H1 (cell line): ENCODE measurements at regions of chr14 and their contacts with region 1.

Region 1: GRCh38 chr14:22929104-22929847 is at the start of gene PRMT5:
- DNase-seq: peak; percentile 99
- H3K4me3 ChIP-seq: peak within 1 kb of the TSS; percentile 65 to 94 (median 86)
- H3K27ac ChIP-seq: peak within 1 kb of the TSS; percentile 95
- H3K4me1 ChIP-seq: peaks cover 0 to 3% (median 1%) of the 10 kb centered on the region in 4 experiments; a peak in 3 of 7 replicates
- H3K27me3 ChIP-seq: no peaks in the 10 kb centered on the region
- CTCF ChIP-seq: no peak
- EP300 ChIP-seq: no peak
- POLR2A ChIP-seq: peak; percentile 82 to 95
- RAD21 ChIP-seq: no peak
- total RNA-seq, gene PRMT5: 159 and 171 TPM in 2 replicates

Region 2: GRCh38 chr14:22748631-22749068 is 180.6 kb before region 1 on chr14:
- CTCF ChIA-PET with region 1: no interaction called
- POLR2A ChIA-PET with region 1: no interaction called
- DNase-seq: no peak
- H3K4me3 ChIP-seq: no peak overlapping the region
- H3K27ac ChIP-seq: no peak overlapping the region
- H3K4me1 ChIP-seq: no peaks in the 10 kb centered on the region
- H3K27me3 ChIP-seq: no peaks in the 10 kb centered on the region
- CTCF ChIP-seq: no peak
- EP300 ChIP-seq: no peak
- POLR2A ChIP-seq: no peak
- RAD21 ChIP-seq: no peak

Region 3: DNA sequence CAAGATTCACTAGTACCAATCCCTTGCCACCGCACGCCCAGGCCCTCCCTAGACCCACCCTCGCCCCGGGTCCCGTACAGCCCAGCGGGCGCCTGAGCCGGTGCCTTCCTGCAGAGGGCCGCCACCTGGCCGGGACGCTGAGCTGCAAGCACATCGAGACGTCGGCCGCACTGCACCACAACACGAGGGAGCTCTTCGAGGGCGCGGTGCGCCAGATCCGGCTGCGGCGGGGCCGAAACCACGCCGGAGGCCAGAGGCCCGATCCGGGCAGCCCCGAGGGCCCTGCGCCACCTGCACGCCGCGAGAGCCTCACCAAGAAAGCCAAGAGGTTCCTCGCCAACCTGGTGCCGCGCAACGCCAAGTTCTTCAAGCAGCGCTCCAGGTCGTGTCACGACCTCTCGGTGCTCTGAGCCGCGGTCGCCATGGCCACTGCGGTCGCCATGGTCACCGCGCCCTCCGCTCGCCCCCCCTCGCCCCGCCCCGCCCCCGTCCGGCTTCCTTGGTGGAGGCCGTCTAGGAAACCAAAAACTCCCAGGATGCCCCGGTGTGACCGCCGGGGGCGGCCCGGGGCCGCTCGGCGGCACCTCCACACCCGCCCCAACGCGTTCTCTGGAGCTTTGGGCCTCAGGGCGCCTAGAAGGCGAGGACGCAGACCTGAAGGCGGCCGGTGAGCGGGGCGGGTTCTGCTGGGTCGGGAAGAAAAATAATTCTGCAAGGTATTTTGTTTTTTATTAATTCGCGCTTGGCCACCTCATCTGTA is 42.6 kb before region 1 on chr14:
- CTCF ChIA-PET with region 1: no interaction called
- POLR2A ChIA-PET with region 1: interaction called, 20 read pairs
- DNase-seq: peak in 1 of 2 experiments; percentile 87
- H3K4me3 ChIP-seq: peak overlapping the region; percentile 57 to 83 (median 65)
- H3K27ac ChIP-seq: peak overlapping the region; percentile 25
- H3K4me1 ChIP-seq: peaks cover 7 to 21% (median 12%) of the 10 kb centered on the region in 4 experiments
- H3K27me3 ChIP-seq: peaks cover 0 to 17% (median 11%) of the 10 kb centered on the region in 4 experiments; a peak in 6 of 7 replicates
- CTCF ChIP-seq: peak; percentile 17 to 35 (median 21); a peak in 3 of 4 replicates
- EP300 ChIP-seq: no peak
- POLR2A ChIP-seq: peak in 1 of 2 experiments; percentile 75; a peak in 2 of 3 replicates
- RAD21 ChIP-seq: peak in 1 of 2 experiments; percentile 6; a peak in 2 of 4 replicates

Region 4: GRCh38 chr14:22939684-22940083 is 10.4 kb after region 1 on chr14:
- CTCF ChIA-PET with region 1: interaction called, 22 read pairs
- POLR2A ChIA-PET with region 1: no interaction called
- DNase-seq: no peak
- H3K4me3 ChIP-seq: no peak overlapping the region
- H3K27ac ChIP-seq: no peak overlapping the region
- H3K4me1 ChIP-seq: no peaks in the 10 kb centered on the region
- H3K27me3 ChIP-seq: no peaks in the 10 kb centered on the region
- CTCF ChIP-seq: no peak
- EP300 ChIP-seq: no peak
- POLR2A ChIP-seq: no peak
- RAD21 ChIP-seq: no peak

Region 5: DNA sequence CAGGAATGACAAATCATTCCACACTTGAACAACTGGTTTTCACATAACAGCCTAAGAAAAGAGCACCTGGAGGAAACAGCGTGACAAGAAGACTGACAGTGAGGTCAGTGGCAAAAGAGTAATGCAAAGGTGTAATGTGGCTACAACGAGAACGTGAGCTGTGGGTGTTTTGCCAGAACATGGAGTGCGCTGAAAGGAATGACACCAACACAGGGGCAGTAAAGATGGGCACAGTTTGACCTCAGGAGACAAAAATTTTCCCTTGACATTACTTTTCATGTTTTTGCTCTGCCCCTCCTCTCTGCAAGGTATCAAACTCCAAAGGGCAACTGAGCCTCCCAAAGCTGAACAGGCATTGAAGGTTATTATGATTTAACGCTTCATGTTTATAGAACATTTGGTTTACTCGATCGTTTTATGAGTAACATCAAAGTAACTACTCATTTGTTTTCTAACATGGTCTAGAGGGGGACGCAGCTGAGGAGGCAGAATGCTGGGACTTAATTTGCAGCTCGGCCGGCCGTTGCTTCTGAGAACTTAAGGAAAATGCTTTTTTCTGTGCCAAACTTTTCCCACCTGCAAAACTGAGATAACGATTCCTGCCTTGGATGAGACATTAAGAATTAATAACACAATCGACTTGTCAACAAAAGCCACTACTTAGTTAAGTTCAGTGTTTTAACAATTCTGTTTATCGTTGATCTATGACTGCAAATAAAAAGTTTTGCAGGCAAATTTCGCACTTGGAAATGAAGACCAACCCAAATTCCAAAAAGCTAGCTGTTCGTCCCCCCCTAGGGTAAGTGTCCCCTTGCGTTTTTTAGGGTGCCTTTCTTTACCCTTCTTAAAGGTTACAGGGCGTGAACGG is 26.7 kb after region 1 on chr14:
- CTCF ChIA-PET with region 1: interaction called, 17 read pairs
- POLR2A ChIA-PET with region 1: interaction called, 25 read pairs
- DNase-seq: no peak
- H3K4me3 ChIP-seq: peak overlapping the region; percentile 71 to 88 (median 84)
- H3K27ac ChIP-seq: 0 out of 2 replicates have a peak overlapping the region, but pooled peaks have one; percentile 89
- H3K4me1 ChIP-seq: peaks cover 2 to 4% (median 2%) of the 10 kb centered on the region in 4 experiments; a peak in 5 of 7 replicates
- H3K27me3 ChIP-seq: no peaks in the 10 kb centered on the region
- CTCF ChIP-seq: no peak
- EP300 ChIP-seq: no peak
- POLR2A ChIP-seq: no peak
- RAD21 ChIP-seq: no peak

Region 6: DNA sequence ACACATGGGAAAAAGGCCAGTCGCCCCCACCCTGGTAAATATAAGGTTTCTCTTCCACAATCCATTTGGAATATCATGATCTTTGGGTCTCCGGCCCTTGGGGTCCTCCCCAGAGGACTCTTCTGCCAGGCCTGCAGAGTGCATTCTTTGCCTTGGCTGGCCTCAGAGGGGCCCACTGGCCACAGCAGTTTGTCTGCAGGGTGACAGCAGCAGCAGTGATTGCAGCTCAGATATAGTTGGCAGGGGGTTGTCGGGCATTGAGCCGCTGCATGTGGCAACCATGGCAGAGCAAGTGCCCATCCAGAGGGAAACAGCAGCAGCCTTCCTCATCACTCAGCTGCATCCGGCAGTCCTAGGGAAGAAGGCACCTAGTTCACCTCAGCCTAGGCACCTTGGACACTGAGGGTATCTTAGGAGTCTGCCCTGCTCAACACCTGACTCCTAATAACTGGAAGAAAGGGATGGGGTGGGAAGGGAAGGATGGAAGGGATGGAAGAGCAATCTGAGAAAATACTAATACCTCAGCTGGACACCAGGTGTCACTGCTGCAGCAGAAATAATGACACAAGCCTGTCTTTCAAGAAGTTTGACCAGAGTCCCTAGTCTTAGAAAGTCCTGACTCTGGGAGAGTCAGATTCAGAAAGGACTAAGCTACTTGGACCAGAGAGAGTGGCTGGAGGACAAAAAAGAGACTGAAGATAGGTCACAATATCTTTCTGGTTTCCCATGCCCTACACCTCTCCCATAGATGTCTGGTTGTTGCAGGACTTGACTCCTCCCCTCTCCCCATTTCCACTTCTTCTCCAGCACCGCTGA is 44.1 kb after region 1 on chr14:
- CTCF ChIA-PET with region 1: interaction called, 10 read pairs
- POLR2A ChIA-PET with region 1: interaction called, 13 read pairs
- DNase-seq: peak in 1 of 2 experiments; percentile 66
- H3K4me3 ChIP-seq: no peak overlapping the region
- H3K27ac ChIP-seq: no peak overlapping the region
- H3K4me1 ChIP-seq: peaks cover 13 to 20% (median 18%) of the 10 kb centered on the region in 4 experiments
- H3K27me3 ChIP-seq: no peaks in the 10 kb centered on the region
- CTCF ChIP-seq: peak in 2 of 3 experiments; percentile 75 to 76; a peak in 3 of 4 replicates
- EP300 ChIP-seq: no peak
- POLR2A ChIP-seq: no peak; a peak in 1 of 3 replicates
- RAD21 ChIP-seq: peak; percentile 84 to 88

Region 7: GRCh38 chr14:22994762-22995275 is 65.5 kb after region 1 on chr14:
- CTCF ChIA-PET with region 1: interaction called, 11 read pairs
- POLR2A ChIA-PET with region 1: interaction called, 3 read pairs
- DNase-seq: no peak
- H3K4me3 ChIP-seq: no peak overlapping the region
- H3K27ac ChIP-seq: no peak overlapping the region
- H3K4me1 ChIP-seq: peaks cover 0 to 5% (median 2%) of the 10 kb centered on the region in 4 experiments; a peak in 2 of 7 replicates
- H3K27me3 ChIP-seq: no peaks in the 10 kb centered on the region
- CTCF ChIP-seq: peak; percentile 38 to 64 (median 46); a peak in 3 of 4 replicates
- EP300 ChIP-seq: no peak
- POLR2A ChIP-seq: no peak
- RAD21 ChIP-seq: peak; percentile 55 to 72

Region 8: DNA sequence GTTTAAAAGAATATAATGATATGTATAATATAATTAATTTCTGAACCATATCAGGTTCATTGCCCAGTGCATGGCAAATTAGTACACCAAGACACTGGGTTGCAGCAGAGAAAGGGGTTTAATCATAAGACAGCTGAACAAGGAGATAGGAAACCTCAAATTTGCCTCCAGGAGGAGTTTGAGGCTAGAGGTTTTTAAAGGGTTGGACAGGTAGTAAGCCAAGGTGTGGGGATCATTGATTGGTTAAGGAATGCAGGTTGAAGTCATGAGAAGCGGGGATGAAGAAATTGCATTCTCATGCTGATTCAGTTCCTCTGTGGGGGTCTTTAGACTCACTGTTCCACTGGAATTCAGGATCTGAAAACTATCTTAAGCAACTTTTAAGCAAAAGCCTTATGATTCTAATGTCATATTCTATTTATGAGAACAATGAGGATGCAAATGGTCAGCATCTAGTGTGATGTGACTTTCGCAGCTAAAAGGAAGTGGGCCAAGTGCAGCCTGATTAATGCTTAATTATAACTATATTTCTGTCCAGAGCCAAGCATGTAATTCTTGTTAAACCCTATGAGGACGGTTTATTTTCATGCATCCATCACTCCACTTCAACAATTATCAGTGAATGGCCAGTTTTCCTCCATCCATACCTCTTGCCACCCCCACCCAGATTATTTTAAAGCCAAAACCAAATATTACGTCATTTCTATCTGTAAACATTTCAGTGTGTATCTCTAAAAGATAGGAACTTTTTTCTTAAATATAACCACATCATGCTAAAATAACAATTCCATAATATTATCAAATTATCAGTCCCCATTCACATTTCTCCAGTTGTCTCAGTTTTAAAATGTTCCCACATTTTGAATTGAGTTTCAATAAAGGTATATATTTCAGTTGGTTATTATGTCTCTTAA is 323.4 kb after region 1 on chr14:
- CTCF ChIA-PET with region 1: no interaction called
- POLR2A ChIA-PET with region 1: no interaction called
- DNase-seq: peak in 1 of 2 experiments; percentile 39
- H3K4me3 ChIP-seq: peak overlapping the region in 3 of 4 experiments; percentile 15 to 46 (median 20); a peak in 6 of 8 replicates
- H3K27ac ChIP-seq: peak overlapping the region; percentile 89
- H3K4me1 ChIP-seq: peaks cover 9 to 22% (median 13%) of the 10 kb centered on the region in 4 experiments; a peak in 5 of 7 replicates
- H3K27me3 ChIP-seq: no peaks in the 10 kb centered on the region
- CTCF ChIP-seq: no peak
- EP300 ChIP-seq: no peak
- POLR2A ChIP-seq: no peak; a peak in 1 of 3 replicates
- RAD21 ChIP-seq: no peak